ENCODE measurements at regions of chr1 and their contacts with region 1.

Region 1: DNA sequence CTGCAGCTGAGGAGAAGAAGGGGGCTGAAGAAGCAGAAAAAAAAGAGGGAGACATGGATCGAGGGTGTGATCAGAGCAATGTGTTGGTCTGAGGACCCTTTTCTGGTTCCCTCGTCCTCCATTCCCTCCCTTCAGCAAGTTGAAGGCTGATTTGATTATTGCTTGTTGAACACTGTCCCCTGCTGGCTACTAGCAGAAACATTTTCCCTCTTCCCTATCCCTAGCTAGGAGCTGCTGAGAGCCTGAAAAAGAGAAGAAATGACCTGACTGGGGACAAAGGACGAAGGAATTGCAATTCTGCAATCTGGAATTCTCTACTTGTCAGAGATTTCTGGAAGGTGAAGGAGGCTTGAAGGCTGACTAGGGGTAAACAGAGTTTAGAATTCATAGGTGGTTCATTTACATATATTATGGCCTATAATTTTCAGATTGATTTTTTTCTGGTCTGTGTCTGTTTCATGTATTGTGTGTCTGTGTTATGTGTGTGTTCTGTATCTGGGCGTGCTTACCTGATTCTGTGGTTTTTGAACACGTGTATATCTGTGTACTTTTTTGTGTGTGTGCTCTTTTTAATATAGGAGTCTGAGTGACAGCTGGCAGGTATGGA is 9.8 kb downstream of the NHLH1 start:
- DNase-seq: no peak
- ATAC-seq: peak; percentile 71
- H3K4me3 Mint-ChIP-seq: peak overlapping the region; percentile 49
- H3K27ac Mint-ChIP-seq: no peak overlapping the region
- H3K4me1 Mint-ChIP-seq: peaks cover 35% of the 10 kb centered on the region
- H3K27me3 Mint-ChIP-seq: no peaks in the 10 kb centered on the region
- CTCF ChIP-seq: peak; percentile 61

Region 2: DNA sequence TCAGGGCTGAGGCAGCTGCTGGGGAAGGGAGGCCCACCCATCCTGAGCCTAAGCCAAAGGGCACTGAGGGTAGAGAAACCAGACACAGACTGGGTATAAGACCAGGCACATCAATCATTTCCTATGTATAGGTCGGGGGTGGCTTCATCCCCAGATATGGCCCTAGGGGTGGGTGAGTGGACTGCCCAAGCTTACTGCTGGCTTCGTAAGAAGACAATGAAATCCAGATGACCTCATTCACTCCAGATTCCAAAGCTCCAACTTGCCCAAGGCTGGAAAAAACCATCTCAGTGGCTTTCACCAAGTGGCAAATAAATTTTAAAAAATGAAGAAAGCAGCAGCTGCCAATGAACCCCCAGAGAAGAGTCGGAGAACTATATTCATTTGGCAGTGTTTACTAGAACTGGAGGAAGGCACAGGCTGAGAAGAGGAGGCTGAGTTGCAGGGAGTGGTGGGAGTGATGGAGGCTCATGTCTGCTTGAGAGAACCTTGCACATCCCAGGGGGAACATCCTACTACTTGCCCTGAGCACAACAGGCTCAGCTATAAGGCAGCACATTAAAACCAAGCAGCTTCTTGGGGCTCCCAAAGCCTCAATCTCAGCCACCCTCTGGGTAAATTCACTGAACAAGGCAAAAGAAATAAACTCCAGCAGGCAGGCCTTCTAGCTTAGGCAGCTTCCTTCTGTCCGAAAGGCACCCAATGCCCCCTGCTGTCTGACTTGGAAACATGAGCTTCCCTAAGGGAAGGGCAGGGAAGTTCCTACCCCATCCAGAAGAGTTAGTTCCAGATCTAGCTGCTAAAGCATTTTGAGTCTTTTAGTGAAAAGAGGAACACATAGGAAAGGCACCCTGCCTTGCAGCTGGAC is 157.3 kb before region 1 on chr1:
- CTCF ChIA-PET with region 1: interaction called, 19 read pairs
- POLR2A ChIA-PET with region 1: no interaction called
- DNase-seq: peak; percentile 69
- ATAC-seq: peak; percentile 87
- H3K4me3 Mint-ChIP-seq: no peak overlapping the region
- H3K27ac Mint-ChIP-seq: peak overlapping the region; percentile 79
- H3K4me1 Mint-ChIP-seq: peaks cover 15% of the 10 kb centered on the region
- H3K27me3 Mint-ChIP-seq: no peaks in the 10 kb centered on the region
- CTCF ChIP-seq: no peak

Region 3: DNA sequence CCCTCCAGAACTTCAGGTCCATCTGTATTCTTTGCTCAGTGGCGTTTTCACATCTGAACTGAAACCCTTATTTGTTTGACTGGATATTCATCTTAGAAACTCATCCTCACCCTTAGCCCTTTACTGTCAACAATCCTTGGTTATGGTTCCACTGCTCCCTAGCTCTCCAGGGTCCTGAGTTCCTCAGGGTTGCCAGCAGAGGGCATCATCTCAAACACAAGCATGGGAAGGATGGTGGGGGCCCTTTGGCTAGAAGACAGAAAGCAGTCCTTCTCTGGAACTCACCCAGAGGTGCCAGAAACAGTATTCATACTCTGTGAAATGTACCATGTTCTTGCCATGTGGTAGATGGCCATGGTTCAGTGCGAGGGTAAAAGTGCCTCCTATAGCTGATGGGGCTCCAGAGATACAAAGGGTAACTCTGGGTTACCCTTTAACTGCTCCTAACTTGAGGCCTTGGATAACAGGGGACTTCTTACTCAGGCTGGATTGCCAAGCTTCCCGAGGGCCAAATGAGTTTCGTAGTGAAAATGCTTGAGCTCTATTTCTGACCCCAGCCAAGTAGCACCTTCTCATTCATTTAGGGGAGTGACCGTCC is 22.1 kb before region 1 on chr1:
- CTCF ChIA-PET with region 1: interaction called, 199 read pairs
- POLR2A ChIA-PET with region 1: interaction called, 7 read pairs
- DNase-seq: peak; percentile 49
- ATAC-seq: peak; percentile 94
- H3K4me3 Mint-ChIP-seq: no peak overlapping the region
- H3K27ac Mint-ChIP-seq: no peak overlapping the region
- H3K4me1 Mint-ChIP-seq: no peaks in the 10 kb centered on the region
- H3K27me3 Mint-ChIP-seq: no peaks in the 10 kb centered on the region
- CTCF ChIP-seq: peak; percentile 25; the same call in 1 of the 2 replicates

Region 4: GRCh38 chr1:160400223-160400645 is 23.6 kb after region 1 on chr1 and contains the start of gene VANGL2:
- CTCF ChIA-PET with region 1: interaction called, 11 read pairs
- POLR2A ChIA-PET with region 1: interaction called, 5 read pairs
- DNase-seq: peak; percentile 87
- ATAC-seq: peak; percentile 72
- H3K4me3 Mint-ChIP-seq: peak within 1 kb of the TSS; percentile 86
- H3K27ac Mint-ChIP-seq: peak within 1 kb of the TSS; percentile 81
- H3K4me1 Mint-ChIP-seq: peaks cover 51% of the 10 kb centered on the region
- H3K27me3 Mint-ChIP-seq: no peaks in the 10 kb centered on the region; the same call in 1 of the 2 replicates
- CTCF ChIP-seq: no peak
- total RNA-seq, gene VANGL2: 68.0 to 69.7 TPM (median 68.6 TPM) in 3 replicates

Region 5: GRCh38 chr1:160416369-160416768 is 39.7 kb after region 1 on chr1:
- CTCF ChIA-PET with region 1: interaction called, 31 read pairs
- POLR2A ChIA-PET with region 1: no interaction called
- DNase-seq: peak; percentile 47
- ATAC-seq: peak; percentile 92
- H3K4me3 Mint-ChIP-seq: no peak overlapping the region
- H3K27ac Mint-ChIP-seq: 0 out of 2 replicates have a peak overlapping the region, but pooled peaks have one; percentile 20
- H3K4me1 Mint-ChIP-seq: peaks cover 20% of the 10 kb centered on the region
- H3K27me3 Mint-ChIP-seq: no peaks in the 10 kb centered on the region
- CTCF ChIP-seq: peak; percentile 35; the same call in 1 of the 2 replicates

Region 6: DNA sequence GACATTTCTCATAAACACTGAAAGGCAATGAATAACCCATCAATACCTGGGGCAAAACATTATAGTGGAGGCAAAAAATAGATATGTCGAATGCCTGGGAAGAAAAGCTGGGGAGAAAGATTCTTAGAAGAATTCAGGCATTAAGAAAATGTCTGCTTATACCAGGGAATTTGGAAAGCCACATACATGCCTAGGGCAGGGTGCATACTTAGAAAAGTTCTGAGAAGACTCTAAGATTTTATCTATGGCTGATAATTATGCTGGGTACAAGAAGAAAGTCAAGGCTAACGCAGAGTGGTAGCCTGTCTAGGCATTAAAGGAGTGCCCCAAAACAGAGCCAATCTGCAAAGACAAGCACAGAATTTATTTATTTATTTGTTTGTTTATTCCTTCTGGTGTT is 128.0 kb after region 1 on chr1:
- CTCF ChIA-PET with region 1: no interaction called
- POLR2A ChIA-PET with region 1: no interaction called
- DNase-seq: no peak
- ATAC-seq: no peak
- H3K4me3 Mint-ChIP-seq: no peak overlapping the region
- H3K27ac Mint-ChIP-seq: no peak overlapping the region
- H3K4me1 Mint-ChIP-seq: no peaks in the 10 kb centered on the region
- H3K27me3 Mint-ChIP-seq: peaks cover 15% of the 10 kb centered on the region
- CTCF ChIP-seq: no peak